ENCODE measurements at regions of chr18 and their contacts with region 1.

Region 1: DNA sequence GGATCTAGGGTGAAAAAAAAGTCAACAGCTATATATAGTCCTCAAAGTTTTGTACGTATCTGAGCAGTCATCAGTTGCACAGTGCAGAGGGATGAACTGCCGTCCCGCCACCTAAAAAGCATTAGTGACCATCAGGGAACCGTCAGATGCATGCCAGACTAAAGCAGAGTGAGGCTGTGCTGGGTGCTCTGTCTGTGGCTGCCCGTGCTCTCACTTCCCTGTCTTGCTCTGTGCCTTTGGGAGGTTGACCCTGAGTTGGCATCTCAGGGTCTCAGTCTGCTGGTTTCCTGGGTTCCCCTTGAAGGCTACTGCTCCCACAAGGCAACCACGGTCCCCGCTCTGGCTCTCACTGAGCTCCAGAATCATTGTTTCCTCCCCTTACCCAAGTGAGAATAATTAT is 11.1 kb downstream of the CLUL1 start:
- DNase-seq: no peak
- ATAC-seq: peak in 1 of 4 donors; percentile 57
- H3K4me3 ChIP-seq: no peak overlapping the region
- H3K27ac ChIP-seq: no peak overlapping the region
- H3K4me1 ChIP-seq: no peaks in the 10 kb centered on the region
- H3K27me3 ChIP-seq: no peaks in the 10 kb centered on the region
- CTCF ChIP-seq: no peak

Region 2: GRCh38 chr18:484749-485464 is 123.0 kb before region 1 on chr18:
- intact Hi-C with region 1: loop called in 1 of 3 experiments (anchors 10 kb)
- DNase-seq: no peak
- ATAC-seq: peak in 1 of 4 donors; percentile 67
- H3K4me3 ChIP-seq: no peak overlapping the region
- H3K27ac ChIP-seq: no peak overlapping the region
- H3K4me1 ChIP-seq: no peaks in the 10 kb centered on the region
- H3K27me3 ChIP-seq: no peaks in the 10 kb centered on the region
- CTCF ChIP-seq: no peak

Measured in pancreas (tissue), 10 donors.